AG04449 (cell line): ENCODE measurements at regions of chr6 and their contacts with region 1.

Region 1: DNA sequence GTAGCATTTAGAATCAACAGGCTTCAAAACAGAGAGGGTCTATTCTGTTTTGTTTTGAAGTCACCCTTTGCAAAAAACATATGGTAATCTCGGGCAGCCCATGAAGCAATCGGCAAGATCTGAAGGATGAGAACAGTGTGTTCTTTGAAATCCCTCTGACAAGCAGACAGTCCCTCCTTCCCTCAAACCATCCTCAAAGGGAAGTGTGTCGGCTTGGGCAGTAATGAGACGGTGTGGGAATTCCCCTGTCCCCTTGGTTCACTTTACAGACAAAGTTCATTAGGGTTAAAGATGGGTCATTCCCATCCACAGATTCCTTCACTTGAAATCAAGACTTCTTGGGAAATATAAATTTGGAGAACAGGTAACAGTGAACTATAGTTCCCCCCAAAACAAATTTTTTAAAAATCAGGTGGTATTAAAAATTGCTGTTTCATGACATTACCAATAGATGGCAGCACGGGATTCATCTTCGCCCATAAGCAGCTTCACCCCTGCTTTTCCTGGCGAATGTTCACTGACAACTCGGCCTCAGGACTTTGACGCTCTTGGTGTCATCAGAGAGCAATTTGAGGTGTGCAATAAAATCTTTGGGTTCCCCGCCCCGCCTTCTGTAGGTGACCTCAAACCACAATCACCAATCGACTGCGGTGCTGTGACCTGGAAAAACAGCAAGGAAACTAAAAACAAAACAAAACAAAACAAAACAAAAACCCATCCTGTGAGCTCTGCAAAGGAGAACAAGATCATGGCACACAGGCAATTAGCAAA is 159.3 kb upstream of the TNFAIP3 start:
- DNase-seq: no peak
- H3K4me3 ChIP-seq: no peak overlapping the region
- CTCF ChIP-seq: peak; percentile 52

Region 2: DNA sequence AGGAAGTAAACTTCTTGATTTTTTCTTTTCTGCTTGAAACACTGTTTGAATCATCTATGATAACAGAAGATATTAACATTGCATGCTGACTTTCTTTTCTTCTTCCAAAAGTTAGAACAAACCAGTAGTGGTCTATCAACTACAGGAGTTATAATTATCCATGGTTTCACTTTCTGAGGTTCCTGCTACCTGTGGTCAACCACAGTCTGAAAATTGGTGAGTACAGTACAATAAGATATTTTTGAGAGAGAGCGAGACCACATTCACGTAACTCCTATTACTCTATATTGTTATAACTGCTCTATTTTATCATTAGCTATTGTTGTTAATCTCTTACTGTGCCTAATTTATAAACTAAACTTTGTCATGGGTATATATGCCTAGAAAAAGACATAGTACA is 1243.6 kb before region 1 on chr6:
- CTCF ChIA-PET with region 1: no interaction called
- POLR2A ChIA-PET with region 1: no interaction called
- DNase-seq: no peak
- H3K4me3 ChIP-seq: no peak overlapping the region
- CTCF ChIP-seq: no peak

Region 3: DNA sequence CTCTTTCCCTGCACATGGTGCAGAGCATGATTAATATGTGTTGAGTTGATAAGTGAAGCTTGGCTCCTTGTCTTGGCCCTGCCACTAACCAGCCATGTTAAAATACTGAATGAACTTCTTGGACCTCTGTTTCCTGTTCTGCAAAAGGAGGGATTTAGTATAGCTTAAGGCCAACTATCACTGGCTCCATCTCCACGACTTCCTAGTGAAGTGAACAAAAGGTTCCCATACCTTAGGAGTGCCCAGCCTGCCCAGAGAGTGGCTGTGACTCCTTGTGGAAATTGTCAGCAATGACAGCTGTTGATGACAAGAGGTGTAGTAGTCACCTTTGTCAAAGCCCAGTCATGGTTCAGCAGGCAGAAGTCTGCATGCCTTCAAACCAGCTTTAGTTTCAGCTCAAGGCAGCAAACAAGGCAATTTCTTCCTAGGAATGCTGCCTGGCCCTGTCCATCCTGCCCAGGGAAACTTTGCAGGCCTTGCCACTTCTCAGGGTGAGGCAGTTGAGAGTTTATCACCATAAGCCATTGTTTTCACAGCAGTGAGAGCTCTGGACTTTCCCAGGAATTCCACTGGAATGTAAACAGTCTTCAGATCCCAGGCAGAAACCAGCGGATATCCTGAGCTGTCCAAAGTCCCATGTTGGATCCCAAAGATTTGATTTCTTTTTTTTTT is 10.4 kb before region 1 on chr6:
- CTCF ChIA-PET with region 1: interaction called, 20 read pairs
- POLR2A ChIA-PET with region 1: interaction called, 3 read pairs
- DNase-seq: peak; percentile 12
- H3K4me3 ChIP-seq: no peak overlapping the region
- CTCF ChIP-seq: no peak

Region 4: DNA sequence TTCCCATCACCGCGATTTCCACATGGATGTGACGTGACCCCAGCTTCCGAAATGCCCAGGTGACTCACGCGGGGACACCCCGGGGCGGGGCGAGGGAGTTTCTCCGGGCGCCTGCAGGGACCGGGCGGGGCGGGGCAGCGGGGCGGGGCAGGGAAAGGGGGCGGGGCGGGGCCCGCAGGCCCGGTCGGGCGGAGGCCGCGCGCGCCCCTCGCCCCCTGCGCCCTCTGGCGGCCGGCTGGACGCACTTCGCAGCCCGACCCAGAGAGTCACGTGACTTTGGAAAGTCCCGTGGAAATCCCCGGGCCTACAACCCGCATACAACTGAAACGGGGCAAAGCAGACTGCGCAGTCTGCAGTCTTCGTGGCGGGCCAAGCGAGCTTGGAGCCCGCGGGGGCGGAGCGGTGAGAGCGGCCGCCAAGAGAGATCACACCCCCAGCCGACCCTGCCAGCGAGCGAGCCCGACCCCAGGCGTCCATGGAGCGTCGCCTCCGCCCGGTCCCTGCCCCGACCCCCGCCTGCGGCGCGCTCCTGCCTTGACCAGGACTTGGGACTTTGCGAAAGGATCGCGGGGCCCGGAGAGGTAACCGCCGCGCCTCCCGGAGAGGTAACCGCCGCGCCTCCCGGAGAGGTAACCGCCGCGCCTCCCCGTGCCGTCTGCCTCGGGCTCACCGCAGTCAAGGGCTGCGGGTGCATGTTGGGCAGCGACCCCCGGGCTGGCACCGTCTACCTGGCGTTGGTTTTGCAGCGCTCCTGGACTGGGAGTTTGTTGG is 159.3 kb after region 1 on chr6 and contains the start of gene TNFAIP3:
- CTCF ChIA-PET with region 1: interaction called, 82 read pairs
- POLR2A ChIA-PET with region 1: no interaction called
- DNase-seq: no peak
- H3K4me3 ChIP-seq: peak within 1 kb of the TSS; percentile 92
- CTCF ChIP-seq: peak; percentile 77

Region 5: GRCh38 chr6:137878486-137879285 is 170.9 kb after region 1 on chr6:
- CTCF ChIA-PET with region 1: interaction called, 41 read pairs
- POLR2A ChIA-PET with region 1: no interaction called
- DNase-seq: no peak
- H3K4me3 ChIP-seq: no peak overlapping the region
- CTCF ChIP-seq: no peak

Region 6: DNA sequence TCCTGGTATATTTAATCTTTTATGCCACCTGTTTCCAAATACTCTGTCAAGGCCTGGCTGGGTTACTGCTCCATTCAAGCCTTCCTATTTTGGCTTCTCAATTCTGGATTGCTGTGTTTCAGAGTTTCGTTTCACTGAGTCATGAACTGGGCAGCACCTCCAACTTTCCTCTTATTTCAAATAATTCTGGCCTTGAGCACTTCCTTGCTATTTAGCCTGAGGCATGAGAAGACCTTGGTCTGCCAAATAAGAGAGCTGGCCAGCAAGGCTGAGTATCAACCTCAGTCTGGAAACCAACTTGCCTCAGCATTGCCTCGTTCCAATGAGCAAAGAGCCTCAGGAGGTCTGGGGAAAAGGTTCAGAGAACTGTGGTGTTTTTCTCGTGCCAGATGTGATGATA is 225.9 kb after region 1 on chr6:
- CTCF ChIA-PET with region 1: interaction called, 248 read pairs
- POLR2A ChIA-PET with region 1: no interaction called
- DNase-seq: no peak
- H3K4me3 ChIP-seq: no peak overlapping the region
- CTCF ChIP-seq: no peak

Region 7: DNA sequence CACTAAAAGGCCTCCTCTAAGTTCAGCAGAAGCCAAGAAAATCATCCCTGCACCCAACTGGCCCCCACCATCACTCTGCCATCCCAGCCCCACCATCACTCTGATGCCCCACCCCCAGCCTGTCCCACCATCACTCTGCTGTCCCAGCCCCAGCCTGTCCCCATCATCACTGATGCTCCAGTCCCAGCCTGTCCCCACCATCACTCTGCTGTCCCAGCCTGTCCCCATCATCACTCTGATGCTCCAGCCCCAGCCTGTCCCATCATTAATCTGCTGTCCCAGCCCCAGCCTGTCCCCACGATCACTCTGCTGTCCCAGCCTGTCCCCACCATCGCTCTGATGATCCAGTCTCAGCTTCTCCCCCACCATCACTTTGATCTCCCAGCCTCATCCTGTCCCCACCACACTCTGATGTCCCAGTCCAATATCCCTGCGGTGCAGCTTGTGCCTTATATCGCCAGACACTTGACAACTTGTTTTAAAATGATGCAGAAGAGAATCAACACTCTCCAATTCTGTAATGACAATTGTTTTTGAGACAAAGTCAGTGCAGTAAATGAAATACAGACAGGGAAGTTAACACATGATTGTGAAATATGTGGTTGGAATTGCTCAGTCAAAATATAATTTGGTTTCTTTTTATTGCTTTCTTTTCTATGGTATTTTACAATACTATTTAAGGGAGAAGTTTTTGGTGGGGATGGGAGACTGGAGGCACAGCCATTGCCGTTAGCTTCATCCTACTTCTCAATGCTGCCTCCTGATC is 260.1 kb after region 1 on chr6:
- CTCF ChIA-PET with region 1: interaction called, 12 read pairs
- POLR2A ChIA-PET with region 1: no interaction called
- DNase-seq: no peak
- H3K4me3 ChIP-seq: no peak overlapping the region
- CTCF ChIP-seq: no peak

Region 8: DNA sequence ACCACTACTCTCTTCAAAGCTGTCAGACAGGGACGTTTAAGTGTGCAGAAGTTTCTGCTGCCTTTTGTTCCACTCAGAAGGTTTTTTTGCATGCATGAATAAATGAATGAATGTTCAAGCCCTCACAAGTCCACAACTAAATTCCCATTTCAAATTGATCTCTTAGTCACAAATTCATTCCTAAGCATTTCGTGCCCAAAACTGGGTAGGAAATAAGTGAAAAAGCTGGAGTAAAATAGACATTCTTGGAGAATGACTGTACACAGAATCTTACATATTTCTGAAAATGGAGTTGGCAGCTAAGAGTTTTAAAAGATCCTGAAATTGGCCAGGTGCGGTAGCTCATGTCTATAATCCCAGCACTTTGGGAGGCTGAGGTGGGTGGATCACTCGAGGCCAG is 281.9 kb after region 1 on chr6:
- CTCF ChIA-PET with region 1: no interaction called
- POLR2A ChIA-PET with region 1: no interaction called
- DNase-seq: no peak
- H3K4me3 ChIP-seq: no peak overlapping the region
- CTCF ChIP-seq: no peak

Region 9: GRCh38 chr6:138001750-138002349 is 294.1 kb after region 1 on chr6:
- CTCF ChIA-PET with region 1: interaction called, 59 read pairs
- POLR2A ChIA-PET with region 1: no interaction called
- DNase-seq: no peak
- H3K4me3 ChIP-seq: no peak overlapping the region
- CTCF ChIP-seq: peak; percentile 73

Region 10: DNA sequence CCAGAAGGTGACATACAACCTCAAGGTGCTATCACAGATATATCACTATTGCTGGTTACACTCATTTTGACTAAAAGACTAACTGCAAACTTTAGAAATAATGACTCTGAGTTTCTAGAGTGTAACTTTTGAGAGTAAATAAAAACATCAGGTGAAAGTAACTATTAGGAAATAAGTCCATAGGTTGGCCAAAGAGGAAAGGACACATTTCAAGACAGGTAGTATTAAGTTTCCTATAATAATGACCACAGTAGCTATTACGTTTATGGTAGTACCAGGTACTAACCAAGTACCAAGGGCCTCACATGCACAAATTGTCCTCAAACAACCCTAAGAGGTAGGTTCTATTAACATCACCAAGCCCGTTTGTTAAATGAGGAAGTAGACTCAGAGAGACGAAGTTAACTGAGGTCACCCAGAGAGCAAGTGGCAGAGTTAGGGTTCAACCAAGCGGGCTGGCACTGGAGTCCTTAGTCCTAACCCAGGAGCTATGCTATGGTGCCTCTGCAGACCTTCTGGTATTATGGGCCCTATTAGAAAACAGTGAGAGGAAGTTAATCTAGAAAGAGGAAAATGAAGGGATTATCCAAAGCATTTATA is 733.1 kb after region 1 on chr6:
- CTCF ChIA-PET with region 1: no interaction called
- POLR2A ChIA-PET with region 1: no interaction called
- DNase-seq: no peak
- H3K4me3 ChIP-seq: no peak overlapping the region
- CTCF ChIP-seq: no peak